Esophagus muscularis mucosa (tissue), 4 donors: ENCODE measurements at regions of chr14 and their contacts with region 1.

Region 1: GRCh38 chr14:80055667-80056496 is 155.4 kb downstream of the DIO2 start:
- DNase-seq: no peak
- H3K4me3 ChIP-seq: no peak overlapping the region
- H3K27ac ChIP-seq: no peak overlapping the region
- H3K4me1 ChIP-seq: peaks cover 0 to 13% (median 6%) of the 10 kb centered on the region in 4 donors
- H3K27me3 ChIP-seq: no peaks in the 10 kb centered on the region
- CTCF ChIP-seq: peak; percentile 75 to 82 (median 81)
- EP300 ChIP-seq: no peak
- POLR2A ChIP-seq: no peak

Region 2: DNA sequence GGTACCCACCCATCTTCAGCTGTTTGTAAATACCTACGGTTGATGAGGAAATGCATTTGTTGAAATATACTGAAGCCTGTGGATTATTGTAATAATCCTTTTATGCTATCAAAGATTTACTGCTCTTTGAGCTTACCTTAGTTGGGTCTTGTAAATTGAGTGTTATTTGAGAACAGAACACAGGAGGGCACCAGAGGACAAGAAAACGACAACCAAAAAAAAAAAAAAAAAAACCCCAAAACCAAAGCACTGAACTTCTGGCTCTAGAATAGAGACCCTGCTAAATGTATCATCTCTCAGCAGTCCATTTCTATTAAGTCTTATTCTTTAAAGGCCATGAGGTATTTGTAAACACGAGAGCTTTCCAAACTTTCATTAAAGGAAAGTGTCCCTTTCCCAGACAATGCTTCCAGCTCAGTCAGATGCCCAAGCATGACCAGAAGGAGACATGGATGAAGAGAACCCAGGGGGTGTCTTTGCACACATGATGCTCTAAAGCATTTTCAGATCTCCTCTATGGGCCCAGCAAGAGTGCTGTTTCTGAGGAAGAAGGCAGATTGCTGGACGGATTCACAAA is 1121.8 kb before region 1 on chr14:
- intact Hi-C with region 1: loop called (anchors 10 kb)
- DNase-seq: no peak
- H3K4me3 ChIP-seq: no peak overlapping the region
- H3K27ac ChIP-seq: no peak overlapping the region
- H3K4me1 ChIP-seq: no peaks in the 10 kb centered on the region
- H3K27me3 ChIP-seq: no peaks in the 10 kb centered on the region
- CTCF ChIP-seq: peak; percentile 38 to 51 (median 40)
- EP300 ChIP-seq: no peak
- POLR2A ChIP-seq: no peak

Region 3: DNA sequence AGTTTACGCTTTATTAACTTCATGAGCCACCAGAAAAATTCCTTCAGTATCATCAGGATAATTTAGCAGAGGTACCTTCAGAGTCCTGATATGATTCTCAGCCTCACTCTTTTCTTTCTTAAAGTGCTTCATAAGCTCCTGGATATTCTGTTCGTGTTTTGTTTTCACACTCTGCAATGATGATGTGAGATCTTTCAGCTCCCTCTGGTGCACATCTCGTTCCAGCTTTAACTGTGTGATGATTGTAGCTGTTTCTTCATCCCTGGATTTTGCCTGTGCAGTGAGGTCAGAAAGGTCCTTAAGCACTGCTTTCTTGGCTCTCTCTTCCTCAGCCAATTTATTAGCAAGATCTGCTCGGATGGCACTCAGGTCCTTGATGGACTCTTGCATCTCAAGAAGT is 728.9 kb after region 1 on chr14:
- intact Hi-C with region 1: loop called (anchors 10 kb)
- DNase-seq: no peak
- H3K4me3 ChIP-seq: no peak overlapping the region
- H3K27ac ChIP-seq: peak overlapping the region in 1 of 4 donors; percentile 15
- H3K4me1 ChIP-seq: peaks cover 0 to 9% (median 4%) of the 10 kb centered on the region in 4 donors
- H3K27me3 ChIP-seq: no peaks in the 10 kb centered on the region
- CTCF ChIP-seq: peak; percentile 36 to 50 (median 37)
- EP300 ChIP-seq: no peak
- POLR2A ChIP-seq: no peak

Region 4: GRCh38 chr14:80850197-80850814 is 794.4 kb after region 1 on chr14:
- intact Hi-C with region 1: loop called (anchors 2 kb)
- DNase-seq: no peak
- H3K4me3 ChIP-seq: no peak overlapping the region
- H3K27ac ChIP-seq: no peak overlapping the region
- H3K4me1 ChIP-seq: peaks cover 0 to 12% (median 11%) of the 10 kb centered on the region in 4 donors
- H3K27me3 ChIP-seq: no peaks in the 10 kb centered on the region
- CTCF ChIP-seq: peak; percentile 66 to 69 (median 68)
- EP300 ChIP-seq: no peak
- POLR2A ChIP-seq: no peak